Common myeloid progenitor, CD34-positive (primary cell): ENCODE measurements at regions of chr7 and their contacts with region 1.

Region 1: DNA sequence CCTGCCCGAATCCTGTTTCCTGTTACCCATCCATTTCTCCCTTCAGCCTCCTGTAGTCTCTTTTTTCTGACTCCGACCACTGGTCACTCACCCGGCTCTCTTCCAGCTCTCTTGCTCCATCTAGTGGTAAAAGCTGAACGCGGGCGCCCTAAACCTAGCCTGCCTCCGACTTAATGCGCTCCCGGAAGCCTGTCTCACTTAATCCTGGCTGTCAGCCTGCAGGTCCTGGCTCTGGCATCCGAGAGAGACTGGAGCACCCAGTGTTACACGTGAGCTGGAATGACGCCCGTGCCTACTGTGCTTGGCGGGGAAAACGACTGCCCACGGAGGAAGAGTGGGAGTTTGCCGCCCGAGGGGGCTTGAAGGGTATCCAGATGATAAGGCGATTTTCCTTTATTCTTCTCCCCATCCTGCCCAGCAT is 10.3 kb downstream of the SUMF2 start:
- DNase-seq: peak; percentile 58 to 77 (median 70)
- H3K4me3 ChIP-seq: no peak overlapping the region
- H3K27ac ChIP-seq: no peak overlapping the region
- H3K4me1 ChIP-seq: peaks cover 0 to 4% (median 1%) of the 10 kb centered on the region in 4 experiments
- H3K27me3 ChIP-seq: no peaks in the 10 kb centered on the region

Region 2: DNA sequence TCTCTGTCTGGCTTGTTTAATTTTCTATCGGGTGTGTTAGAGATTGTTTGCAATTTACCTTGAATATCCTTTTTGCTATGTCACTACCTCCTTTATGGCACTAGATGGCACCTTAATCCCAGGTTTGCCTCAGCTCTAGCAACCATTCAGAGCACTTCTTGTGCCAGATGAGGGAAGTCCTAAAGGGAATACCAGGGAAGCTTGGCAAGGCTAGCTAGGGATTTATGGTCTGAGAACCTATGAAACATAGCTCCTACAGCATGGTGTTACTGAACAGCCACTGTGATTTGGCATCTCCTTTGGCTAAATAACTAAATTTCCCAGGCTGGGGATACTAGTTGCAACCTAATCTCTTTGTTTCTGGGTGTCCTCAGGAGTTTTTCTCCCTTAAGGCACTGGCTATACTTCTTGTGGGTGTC is 433.1 kb before region 1 on chr7:
- CTCF ChIA-PET with region 1: interaction called, 16 read pairs
- POLR2A ChIA-PET with region 1: no interaction called
- DNase-seq: peak; percentile 64 to 81 (median 72)
- H3K4me3 ChIP-seq: no peak overlapping the region
- H3K27ac ChIP-seq: no peak overlapping the region
- H3K4me1 ChIP-seq: peaks cover 0 to 13% (median 8%) of the 10 kb centered on the region in 4 experiments
- H3K27me3 ChIP-seq: no peaks in the 10 kb centered on the region

Region 3: GRCh38 chr7:56009695-56010094 is 64.7 kb before region 1 on chr7:
- CTCF ChIA-PET with region 1: interaction called, 123 read pairs
- POLR2A ChIA-PET with region 1: no interaction called
- DNase-seq: no peak
- H3K4me3 ChIP-seq: no peak overlapping the region
- H3K27ac ChIP-seq: no peak overlapping the region
- H3K4me1 ChIP-seq: no peaks in the 10 kb centered on the region
- H3K27me3 ChIP-seq: no peaks in the 10 kb centered on the region

Region 4: GRCh38 chr7:56033671-56034432 is 40.5 kb before region 1 on chr7:
- CTCF ChIA-PET with region 1: interaction called, 13 read pairs
- POLR2A ChIA-PET with region 1: no interaction called
- DNase-seq: peak; percentile 77 to 90 (median 84)
- H3K4me3 ChIP-seq: peak overlapping the region; percentile 49 to 89 (median 74)
- H3K27ac ChIP-seq: no peak overlapping the region
- H3K4me1 ChIP-seq: peaks cover 0 to 13% (median 9%) of the 10 kb centered on the region in 4 experiments
- H3K27me3 ChIP-seq: no peaks in the 10 kb centered on the region

Region 5: DNA sequence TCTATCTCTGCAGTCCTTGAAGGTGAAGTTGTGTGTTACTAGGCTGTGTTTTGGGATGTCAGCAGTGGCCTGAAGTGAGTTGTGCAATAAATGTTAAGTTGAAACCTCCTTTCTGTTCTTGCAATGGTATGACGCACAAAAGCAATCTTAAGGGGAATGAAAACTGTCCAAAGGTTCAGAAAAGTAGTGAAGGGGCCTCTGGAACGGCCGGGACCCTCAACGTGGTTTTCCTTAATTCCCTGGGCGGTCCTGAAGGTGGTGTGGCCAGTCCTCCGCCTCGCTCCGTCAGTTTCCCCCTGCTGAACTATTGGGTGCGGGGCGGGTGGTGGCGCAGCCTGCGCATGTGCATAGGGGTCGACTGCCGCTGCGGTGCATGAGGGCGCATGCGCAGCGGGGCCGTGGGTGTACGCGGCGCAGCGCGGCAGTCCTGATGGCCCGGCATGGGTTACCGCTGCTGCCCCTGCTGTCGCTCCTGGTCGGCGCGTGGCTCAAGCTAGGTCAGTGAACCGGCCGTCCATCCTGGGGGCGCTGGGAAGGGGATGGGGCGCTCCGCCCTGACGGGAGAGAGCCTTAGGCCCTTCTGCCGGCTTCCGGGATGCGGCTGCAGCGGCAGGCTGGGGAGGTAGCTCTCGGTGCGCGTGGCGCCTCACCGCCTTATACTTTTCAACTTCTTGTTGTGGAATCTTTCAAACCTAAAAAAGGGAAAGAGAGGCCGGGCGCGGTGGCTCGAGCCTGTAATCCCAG is 10.3 kb before region 1 on chr7 and contains the start of gene SUMF2:
- CTCF ChIA-PET with region 1: interaction called, 23 read pairs
- POLR2A ChIA-PET with region 1: no interaction called
- DNase-seq: peak; percentile 87 to 89 (median 89)
- H3K4me3 ChIP-seq: peak within 1 kb of the TSS; percentile 79 to 97 (median 92)
- H3K27ac ChIP-seq: peak within 1 kb of the TSS; percentile 46 to 80
- H3K4me1 ChIP-seq: peaks cover 6 to 28% (median 14%) of the 10 kb centered on the region in 4 experiments
- H3K27me3 ChIP-seq: no peaks in the 10 kb centered on the region

Region 6: GRCh38 chr7:56106108-56107073 is 32.0 kb after region 1 on chr7 and contains the start of gene CHCHD2:
- CTCF ChIA-PET with region 1: interaction called, 10 read pairs
- POLR2A ChIA-PET with region 1: no interaction called
- DNase-seq: peak; percentile 99 to 100 (median 99)
- H3K4me3 ChIP-seq: peak within 1 kb of the TSS; percentile 74 to 98 (median 92)
- H3K27ac ChIP-seq: peak within 1 kb of the TSS; percentile 80 to 94
- H3K4me1 ChIP-seq: peaks cover 10 to 23% (median 18%) of the 10 kb centered on the region in 4 experiments
- H3K27me3 ChIP-seq: no peaks in the 10 kb centered on the region